Activated T-helper 2 cell treated with anti-CD3 and anti-CD28 coated beads, Interferon-gamma antibody, Interleukin-2, Interleukin-4, amounts not matched to agents 10 μg/mL and 5 μg/mL and 100 μg/mL, durations not matched to agents 14 hours and 24 hours and 36 hours (primary cell): ENCODE measurements at regions of chr4 and their contacts with region 1.

Region 1: GRCh38 chr4:113761620-113762185 is at the start of gene CAMK2D:
- DNase-seq: peak; percentile 77
- H3K4me3 Mint-ChIP-seq: peak within 1 kb of the TSS; percentile 93
- H3K27ac Mint-ChIP-seq: peak within 1 kb of the TSS; percentile 92
- H3K4me1 Mint-ChIP-seq: peaks cover 47% of the 10 kb centered on the region
- H3K27me3 Mint-ChIP-seq: no peaks in the 10 kb centered on the region
- total RNA-seq, gene CAMK2D: 58.4 and 61.3 TPM in 2 replicates

Region 2: GRCh38 chr4:113384600-113384999 is 377.1 kb before region 1 on chr4:
- intact Hi-C with region 1: loop called (anchors 1 kb)
- DNase-seq: no peak
- H3K4me3 Mint-ChIP-seq: no peak overlapping the region
- H3K27ac Mint-ChIP-seq: peak overlapping the region; percentile 48
- H3K4me1 Mint-ChIP-seq: peaks cover 11% of the 10 kb centered on the region
- H3K27me3 Mint-ChIP-seq: peaks cover 17% of the 10 kb centered on the region

Region 3: DNA sequence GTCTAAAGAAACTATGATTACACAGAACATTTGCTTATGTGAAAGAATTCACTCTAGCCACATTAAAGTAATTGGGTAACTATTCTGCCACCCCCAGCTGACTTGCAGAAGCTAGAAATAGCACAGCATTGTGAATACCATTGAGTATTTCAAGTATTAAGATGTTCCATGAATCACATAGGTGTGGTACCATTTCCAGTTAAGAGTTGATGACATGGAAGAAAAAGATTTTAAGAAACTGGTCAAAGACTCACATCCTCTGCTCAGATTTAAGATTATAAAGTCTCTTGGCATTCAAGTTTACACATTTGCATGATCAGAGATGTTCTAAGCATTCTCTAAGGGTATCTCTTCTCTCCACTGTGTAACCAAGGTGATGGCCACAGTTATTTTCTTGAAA is 287.7 kb before region 1 on chr4:
- intact Hi-C with region 1: loop called (anchors 1 kb)
- DNase-seq: no peak
- H3K4me3 Mint-ChIP-seq: no peak overlapping the region
- H3K27ac Mint-ChIP-seq: peak overlapping the region; percentile 7
- H3K4me1 Mint-ChIP-seq: peaks cover 28% of the 10 kb centered on the region
- H3K27me3 Mint-ChIP-seq: no peaks in the 10 kb centered on the region

Region 4: DNA sequence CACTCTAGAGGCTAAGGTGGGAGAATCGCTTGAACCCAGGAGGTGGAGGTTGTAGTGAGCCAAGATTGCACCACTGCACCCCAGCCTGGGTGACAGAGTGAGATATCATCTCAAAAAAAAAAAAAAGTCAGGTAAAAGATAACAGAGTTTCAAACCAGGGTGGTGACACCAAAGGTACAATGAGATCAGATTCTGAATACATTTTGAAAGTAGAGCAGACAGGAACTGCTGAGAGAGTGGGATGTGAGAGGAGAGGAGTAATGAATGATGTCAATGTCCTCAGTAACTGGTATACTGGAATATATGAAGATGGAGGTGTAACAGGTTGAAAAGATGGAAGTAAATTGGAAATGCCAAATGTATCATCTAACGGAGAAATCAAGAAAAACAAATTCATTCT is 135.8 kb before region 1 on chr4:
- intact Hi-C with region 1: loop called (anchors 2 kb)
- DNase-seq: no peak
- H3K4me3 Mint-ChIP-seq: peak overlapping the region; percentile 1
- H3K27ac Mint-ChIP-seq: peak overlapping the region; percentile 52
- H3K4me1 Mint-ChIP-seq: peaks cover 45% of the 10 kb centered on the region
- H3K27me3 Mint-ChIP-seq: no peaks in the 10 kb centered on the region

Region 5: DNA sequence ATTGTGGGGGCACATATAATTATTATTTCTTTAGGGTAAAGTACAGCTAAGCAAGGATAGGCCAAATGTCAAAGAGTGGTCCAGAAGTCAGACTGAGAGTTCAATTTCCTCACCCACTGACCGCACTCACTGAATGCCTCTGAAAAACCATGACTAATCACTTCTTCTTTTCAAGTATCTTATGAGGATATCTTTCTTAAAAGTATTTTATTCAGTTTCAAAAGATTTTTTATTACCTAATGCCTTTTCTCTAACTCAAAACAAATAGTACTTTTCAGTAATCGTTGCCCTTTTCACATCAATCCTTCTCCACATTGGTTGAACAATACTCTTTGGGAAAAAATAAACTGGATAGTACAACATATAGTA is 61.6 kb after region 1 on chr4:
- intact Hi-C with region 1: loop called (anchors 1 kb)
- DNase-seq: no peak
- H3K4me3 Mint-ChIP-seq: no peak overlapping the region
- H3K27ac Mint-ChIP-seq: no peak overlapping the region
- H3K4me1 Mint-ChIP-seq: peaks cover 42% of the 10 kb centered on the region
- H3K27me3 Mint-ChIP-seq: peaks cover 6% of the 10 kb centered on the region